ENCODE measurements at regions of chr5 and their contacts with region 1.

Region 1: GRCh38 chr5:55037046-55037771 is 13.2 kb downstream of the GZMK start:
- DNase-seq: peak; percentile 72
- H3K4me3 Mint-ChIP-seq: peak overlapping the region; percentile 50
- H3K27ac Mint-ChIP-seq: peak overlapping the region; percentile 93
- H3K4me1 Mint-ChIP-seq: peaks cover 61% of the 10 kb centered on the region
- H3K27me3 Mint-ChIP-seq: no peaks in the 10 kb centered on the region

Region 2: GRCh38 chr5:54719384-54720283 is 317.6 kb before region 1 on chr5:
- intact Hi-C with region 1: loop called (anchors 5 kb)
- DNase-seq: no peak
- H3K4me3 Mint-ChIP-seq: no peak overlapping the region
- H3K27ac Mint-ChIP-seq: peak overlapping the region; percentile 80
- H3K4me1 Mint-ChIP-seq: peaks cover 46% of the 10 kb centered on the region
- H3K27me3 Mint-ChIP-seq: no peaks in the 10 kb centered on the region

Region 3: GRCh38 chr5:54807421-54807820 is 229.8 kb before region 1 on chr5:
- intact Hi-C with region 1: no loop called
- DNase-seq: no peak
- H3K4me3 Mint-ChIP-seq: no peak overlapping the region
- H3K27ac Mint-ChIP-seq: no peak overlapping the region
- H3K4me1 Mint-ChIP-seq: peaks cover 13% of the 10 kb centered on the region
- H3K27me3 Mint-ChIP-seq: peaks cover 8% of the 10 kb centered on the region

Region 4: DNA sequence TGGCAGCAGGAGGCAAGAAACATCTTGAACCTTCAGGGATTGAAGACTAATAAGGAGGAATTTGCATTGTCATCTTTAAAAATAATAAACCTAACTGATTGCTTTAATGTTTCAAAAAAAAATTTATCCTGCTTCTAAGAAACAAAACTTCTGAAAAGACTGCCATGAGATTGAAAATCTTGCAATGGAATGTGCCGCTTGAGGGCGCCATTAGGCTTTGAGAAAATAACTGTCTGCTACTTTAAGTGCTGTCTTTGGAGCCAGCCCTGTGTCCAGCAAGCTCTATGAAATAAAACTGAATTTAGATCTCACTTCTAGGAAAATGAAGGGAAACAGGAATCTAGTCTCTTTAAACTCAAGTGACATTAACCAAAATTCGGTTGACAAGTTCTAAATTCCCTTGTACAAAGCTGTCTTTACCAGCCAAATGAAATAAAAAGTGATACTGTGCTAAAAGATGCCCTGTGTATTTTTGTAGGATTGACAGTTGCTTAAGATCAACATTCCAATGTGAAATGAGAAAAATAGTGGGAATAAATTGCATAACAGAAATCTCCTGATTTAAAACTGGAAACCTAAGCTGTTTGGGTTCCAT is 131.2 kb before region 1 on chr5:
- intact Hi-C with region 1: loop called (anchors 1 kb)
- DNase-seq: peak; percentile 50
- H3K4me3 Mint-ChIP-seq: no peak overlapping the region
- H3K27ac Mint-ChIP-seq: no peak overlapping the region
- H3K4me1 Mint-ChIP-seq: peaks cover 55% of the 10 kb centered on the region
- H3K27me3 Mint-ChIP-seq: peaks cover 37% of the 10 kb centered on the region

Region 5: GRCh38 chr5:54996466-54996865 is 40.7 kb before region 1 on chr5:
- intact Hi-C with region 1: loop called (anchors 2 kb)
- DNase-seq: no peak
- H3K4me3 Mint-ChIP-seq: no peak overlapping the region
- H3K27ac Mint-ChIP-seq: no peak overlapping the region
- H3K4me1 Mint-ChIP-seq: peaks cover 16% of the 10 kb centered on the region
- H3K27me3 Mint-ChIP-seq: no peaks in the 10 kb centered on the region

Region 6: DNA sequence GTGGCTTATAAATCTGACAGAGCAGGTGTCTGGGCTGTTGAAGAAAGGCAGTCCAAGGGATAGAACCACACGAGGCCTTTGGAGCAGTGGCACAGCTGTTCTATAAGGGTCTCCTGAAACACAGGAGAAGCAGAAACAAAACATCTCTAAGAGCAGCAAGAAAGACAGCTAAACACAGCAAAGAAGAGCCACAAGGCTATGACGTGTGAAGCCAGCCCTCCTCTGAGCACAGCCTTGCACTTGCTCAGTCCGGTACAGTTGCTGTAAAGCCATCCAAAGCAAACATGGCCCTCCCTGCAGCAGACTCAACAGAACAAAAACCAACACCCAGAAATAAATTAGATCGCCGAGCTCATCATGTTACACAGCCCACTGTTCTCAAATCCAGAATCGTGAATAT is 15.8 kb before region 1 on chr5:
- intact Hi-C with region 1: loop called (anchors 1 kb)
- DNase-seq: no peak
- H3K4me3 Mint-ChIP-seq: no peak overlapping the region
- H3K27ac Mint-ChIP-seq: no peak overlapping the region
- H3K4me1 Mint-ChIP-seq: peaks cover 52% of the 10 kb centered on the region
- H3K27me3 Mint-ChIP-seq: no peaks in the 10 kb centered on the region

Region 7: DNA sequence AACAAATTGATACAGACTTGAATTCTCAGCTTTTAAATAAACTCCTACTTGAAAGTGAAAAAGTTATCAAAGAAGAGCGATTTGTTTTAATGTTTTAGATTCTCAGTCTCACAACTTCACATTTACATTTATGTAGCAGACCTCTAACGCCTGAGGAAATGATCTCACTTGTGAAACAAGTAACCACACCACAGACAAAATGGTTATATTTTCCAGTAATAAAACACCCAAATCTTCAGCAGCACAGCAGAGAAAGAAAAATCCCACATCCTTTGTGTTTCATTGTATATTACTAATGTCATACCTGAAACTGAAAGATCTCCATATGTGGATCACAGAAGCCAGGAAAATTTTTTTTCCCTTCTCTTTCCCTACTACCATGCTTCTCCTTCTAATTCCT is 35.5 kb after region 1 on chr5:
- intact Hi-C with region 1: loop called (anchors 1 kb)
- DNase-seq: peak; percentile 31
- H3K4me3 Mint-ChIP-seq: peak overlapping the region; percentile 57
- H3K27ac Mint-ChIP-seq: peak overlapping the region; percentile 88
- H3K4me1 Mint-ChIP-seq: peaks cover 53% of the 10 kb centered on the region
- H3K27me3 Mint-ChIP-seq: no peaks in the 10 kb centered on the region

Region 8: DNA sequence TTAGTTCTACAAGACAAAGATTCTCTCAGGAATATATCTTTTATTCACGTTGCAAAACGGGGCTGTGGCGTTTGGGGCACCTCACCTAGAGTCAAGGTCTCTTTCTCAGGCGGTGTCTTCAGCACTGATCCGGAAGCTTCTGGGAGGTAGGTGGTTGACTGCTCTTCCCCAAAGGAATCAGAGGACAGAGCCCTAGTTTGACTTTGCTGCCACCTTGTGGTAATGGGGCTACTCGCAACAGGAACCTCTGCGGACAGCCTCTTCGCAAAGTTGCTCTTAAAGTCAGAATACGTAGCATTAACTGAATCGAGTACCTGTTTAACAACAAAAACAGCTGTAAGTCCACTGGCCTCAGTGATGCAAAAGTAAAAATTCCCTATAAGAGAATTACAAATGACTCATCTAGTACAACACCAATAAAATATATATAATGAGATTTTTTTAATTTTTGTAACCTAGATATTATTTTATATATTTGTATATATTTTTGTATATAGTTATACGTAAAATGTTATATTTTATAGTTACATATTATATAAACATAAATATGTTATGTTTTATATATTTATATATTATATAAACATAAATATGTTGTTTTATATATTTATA is 109.4 kb after region 1 on chr5:
- intact Hi-C with region 1: loop called (anchors 1 kb)
- DNase-seq: peak; percentile 82
- H3K4me3 Mint-ChIP-seq: peak overlapping the region; percentile 20
- H3K27ac Mint-ChIP-seq: no peak overlapping the region
- H3K4me1 Mint-ChIP-seq: peaks cover 31% of the 10 kb centered on the region
- H3K27me3 Mint-ChIP-seq: peaks cover 17% of the 10 kb centered on the region